PC-9 (cell line): ENCODE measurements at regions of chr17 and their contacts with region 1.

Region 1: DNA sequence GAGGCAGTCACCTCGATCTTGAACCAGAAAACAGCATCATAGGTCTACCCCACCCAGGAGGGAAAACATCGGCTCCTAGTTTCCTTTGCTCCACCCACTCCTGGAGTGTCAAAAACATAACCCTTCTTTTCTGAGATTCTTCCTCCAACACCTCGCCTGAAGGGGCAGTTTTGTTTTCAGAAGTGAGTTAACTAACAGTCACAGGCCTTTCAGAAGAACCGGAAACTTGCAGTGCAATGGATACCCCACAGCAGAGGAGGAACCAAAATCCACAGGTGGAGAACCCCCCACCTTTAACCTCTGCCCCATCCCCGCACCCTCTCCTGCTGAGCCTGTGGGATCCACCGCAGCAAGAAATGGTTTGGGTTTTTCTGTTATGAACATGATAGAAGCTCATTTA is 7.8 kb upstream of the TEX2 start:
- DNase-seq: no peak
- H3K4me3 ChIP-seq: no peak overlapping the region
- H3K27ac ChIP-seq: no peak overlapping the region
- H3K4me1 ChIP-seq: no peaks in the 10 kb centered on the region
- H3K27me3 ChIP-seq: peaks cover 24% of the 10 kb centered on the region
- CTCF ChIP-seq: no peak

Region 2: GRCh38 chr17:64209356-64209941 is 61.4 kb before region 1 on chr17:
- CTCF ChIA-PET with region 1: no interaction called
- POLR2A ChIA-PET with region 1: interaction called, 15 read pairs
- intact Hi-C with region 1: no loop called
- DNase-seq: no peak
- H3K4me3 ChIP-seq: no peak overlapping the region
- H3K27ac ChIP-seq: no peak overlapping the region
- H3K4me1 ChIP-seq: no peaks in the 10 kb centered on the region
- H3K27me3 ChIP-seq: no peaks in the 10 kb centered on the region
- CTCF ChIP-seq: no peak